Posterior cingulate gyrus (tissue), 11 donors: ENCODE measurements at regions of chr20 and their contacts with region 1.

Region 1: DNA sequence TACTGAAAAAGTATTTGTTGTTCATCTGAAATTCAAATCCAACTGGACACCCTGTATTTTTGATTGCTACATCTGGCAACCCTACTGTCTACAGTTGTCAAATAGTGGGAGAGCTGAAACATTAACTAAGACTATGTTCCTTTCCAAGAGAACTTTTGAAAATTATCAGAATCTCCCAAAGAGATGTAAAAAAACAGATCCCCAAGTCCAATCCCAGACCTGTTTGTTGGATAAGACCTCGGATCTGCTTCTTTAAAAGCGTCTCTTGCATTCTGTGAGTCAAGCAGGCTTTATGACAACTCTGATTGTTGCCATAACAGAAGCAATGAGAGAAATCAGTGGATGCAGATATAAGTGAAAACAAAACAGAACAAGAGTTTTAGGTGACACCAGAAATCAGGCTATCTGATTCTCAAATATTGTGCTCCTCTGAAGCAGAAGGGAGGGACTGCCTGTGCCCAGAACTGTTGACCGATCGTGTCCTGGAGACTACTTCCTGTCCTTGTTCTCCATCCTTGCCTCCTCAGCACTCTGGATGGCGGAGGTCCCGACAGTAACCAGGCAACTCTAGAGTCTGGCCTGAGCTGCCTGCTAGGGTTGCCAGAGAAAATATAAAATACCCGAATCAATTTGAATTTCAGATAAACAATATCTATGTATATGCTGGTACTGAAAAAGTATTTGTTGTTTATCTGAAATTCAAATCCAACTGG is 853.8 kb downstream of the MAFB start:
- DNase-seq: peak in 1 of 10 donors; percentile 78

Region 2: GRCh38 chr20:39698752-39699151 is 136.5 kb before region 1 on chr20:
- intact Hi-C with region 1: no loop called
- DNase-seq: no peak

Region 3: DNA sequence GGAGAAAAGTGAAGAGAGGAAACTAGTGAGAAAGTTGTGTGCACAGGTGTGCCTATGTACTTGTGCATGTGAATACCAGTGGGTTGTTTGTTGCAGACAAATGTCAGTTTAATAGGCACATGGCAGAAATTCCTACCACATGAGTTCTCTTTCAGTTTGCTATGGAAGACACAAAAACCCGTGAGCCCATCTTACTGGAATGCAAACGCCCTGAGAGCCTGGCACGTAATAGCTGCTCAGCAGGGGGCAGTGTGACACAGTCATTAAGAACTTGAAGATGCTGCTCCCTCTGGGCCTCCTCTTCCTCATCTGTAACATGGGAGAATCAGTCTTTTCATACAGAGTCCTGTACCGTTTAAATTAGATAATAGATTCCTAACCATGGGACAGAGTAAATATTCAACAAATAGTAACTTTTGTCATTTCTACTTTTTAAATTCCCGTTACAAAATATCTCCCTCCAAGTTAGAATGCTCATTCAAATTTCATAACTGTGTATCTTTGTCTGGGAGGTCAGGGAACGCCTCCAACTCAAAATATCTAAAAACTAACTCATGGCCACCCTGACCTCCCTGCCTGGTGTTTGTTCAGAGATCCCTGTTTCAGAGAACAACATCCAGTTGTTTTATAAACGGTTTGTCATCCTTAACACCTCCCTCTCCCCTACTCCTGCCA is 50.8 kb after region 1 on chr20:
- intact Hi-C with region 1: loop called (anchors 5 kb)
- DNase-seq: peak in 6 of 10 donors; percentile 29 to 84 (median 37)